Endothelial cell of umbilical vein (primary cell): ENCODE measurements at regions of chr2 and their contacts with region 1.

Region 1: GRCh38 chr2:189129971-189130370 is 49.6 kb downstream of the COL5A2 start:
- DNase-seq: no peak
- H3K4me3 ChIP-seq: no peak overlapping the region
- H3K27ac ChIP-seq: no peak overlapping the region
- H3K4me1 ChIP-seq: no peaks in the 10 kb centered on the region
- H3K27me3 ChIP-seq: no peaks in the 10 kb centered on the region
- CTCF ChIP-seq: no peak
- POLR2A ChIP-seq: no peak

Region 2: DNA sequence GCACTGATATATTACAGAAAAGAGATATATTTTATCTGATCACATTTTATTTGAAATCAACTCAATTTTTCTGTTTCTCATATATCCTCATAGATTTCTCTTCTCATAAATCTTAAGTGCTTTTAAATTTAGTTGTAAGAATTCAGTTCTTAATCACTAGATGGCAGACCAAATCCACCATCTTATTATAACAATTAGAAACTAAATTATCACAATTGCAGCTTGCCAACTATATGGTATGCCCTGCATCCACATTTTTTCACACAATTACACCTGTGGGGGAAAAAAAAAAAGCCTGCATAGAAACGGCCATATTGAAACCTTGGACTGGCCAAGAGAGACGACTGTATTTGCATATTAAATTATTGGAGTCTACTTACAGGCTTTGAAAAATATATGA is 14.8 kb before region 1 on chr2:
- CTCF ChIA-PET with region 1: interaction called, 15 read pairs
- POLR2A ChIA-PET with region 1: no interaction called
- dilution Hi-C with region 1: no loop called
- intact Hi-C with region 1: no loop called
- DNase-seq: peak; percentile 50
- H3K4me3 ChIP-seq: no peak overlapping the region
- H3K27ac ChIP-seq: no peak overlapping the region
- H3K4me1 ChIP-seq: no peaks in the 10 kb centered on the region
- H3K27me3 ChIP-seq: no peaks in the 10 kb centered on the region
- CTCF ChIP-seq: no peak
- POLR2A ChIP-seq: no peak